ENCODE measurements at regions of chr14 and their contacts with region 1.

Region 1: DNA sequence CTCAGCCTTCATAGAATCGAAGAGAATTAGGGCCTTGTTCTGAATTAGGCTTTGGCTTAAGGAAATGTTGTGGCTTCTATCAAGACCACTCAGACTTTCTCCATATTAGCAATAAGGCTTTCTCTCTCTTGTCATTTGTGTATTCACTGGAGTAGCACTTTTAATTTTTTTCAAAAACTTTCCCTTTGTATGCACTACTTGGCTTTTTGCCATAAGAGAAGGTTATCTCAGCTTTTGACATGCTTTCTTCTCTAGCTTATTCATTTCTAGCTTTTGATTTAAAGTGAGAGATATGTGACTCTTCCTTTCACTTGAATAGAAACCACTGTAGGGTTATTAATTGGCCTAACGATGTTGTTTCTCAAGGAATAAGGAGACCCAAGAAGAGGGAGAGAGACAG is 244.2 kb downstream of the GPHN start:
- DNase-seq: no peak
- H3K4me3 Mint-ChIP-seq: no peak overlapping the region
- H3K27ac Mint-ChIP-seq: no peak overlapping the region
- H3K4me1 Mint-ChIP-seq: peaks cover 7% of the 10 kb centered on the region
- H3K27me3 Mint-ChIP-seq: no peaks in the 10 kb centered on the region

Region 2: DNA sequence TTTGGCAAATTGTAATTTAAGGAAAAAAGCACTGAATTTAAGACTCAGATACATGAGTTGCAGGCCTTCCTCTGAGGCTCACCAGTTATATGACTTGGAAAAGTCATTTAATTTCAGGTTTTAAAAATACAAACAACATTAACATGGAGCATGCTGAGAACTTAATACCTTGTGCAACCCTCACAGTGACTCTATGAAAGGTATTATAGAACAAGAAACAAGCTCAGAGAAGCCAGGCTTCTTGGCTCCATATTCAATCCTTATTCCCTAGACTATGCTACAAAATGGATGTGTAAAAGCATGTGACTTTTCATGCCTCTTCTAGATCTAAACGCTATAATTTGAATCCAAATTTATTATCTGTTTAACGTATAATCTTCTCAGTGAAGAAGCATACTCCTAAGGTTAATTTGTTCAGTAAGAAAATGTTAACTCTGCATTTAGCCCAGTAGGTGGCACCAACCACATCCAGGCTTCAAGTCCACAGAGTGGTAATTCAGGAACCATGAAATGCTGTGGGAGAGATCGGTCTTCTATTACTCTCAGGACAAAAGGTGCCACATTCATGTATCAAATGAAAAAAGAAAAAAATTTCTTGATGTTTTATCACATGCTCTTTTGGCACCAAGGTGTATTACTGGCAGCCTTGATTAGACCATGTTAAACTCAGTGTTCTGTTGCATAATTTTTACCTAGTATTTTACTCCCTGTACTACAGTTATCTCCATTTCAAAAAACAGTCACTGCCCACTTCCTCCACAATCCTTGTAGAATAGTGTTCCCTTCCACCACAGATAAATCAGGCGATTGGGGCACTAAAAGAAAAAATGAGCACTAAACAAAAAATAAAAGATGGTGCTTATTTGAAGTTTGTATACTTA is 256.7 kb before region 1 on chr14:
- CTCF ChIA-PET with region 1: no interaction called
- POLR2A ChIA-PET with region 1: no interaction called
- intact Hi-C with region 1: loop called (anchors 10 kb)
- DNase-seq: peak; percentile 41
- H3K4me3 Mint-ChIP-seq: no peak overlapping the region
- H3K27ac Mint-ChIP-seq: no peak overlapping the region
- H3K4me1 Mint-ChIP-seq: peaks cover 12% of the 10 kb centered on the region
- H3K27me3 Mint-ChIP-seq: peaks cover 1% of the 10 kb centered on the region

Region 3: DNA sequence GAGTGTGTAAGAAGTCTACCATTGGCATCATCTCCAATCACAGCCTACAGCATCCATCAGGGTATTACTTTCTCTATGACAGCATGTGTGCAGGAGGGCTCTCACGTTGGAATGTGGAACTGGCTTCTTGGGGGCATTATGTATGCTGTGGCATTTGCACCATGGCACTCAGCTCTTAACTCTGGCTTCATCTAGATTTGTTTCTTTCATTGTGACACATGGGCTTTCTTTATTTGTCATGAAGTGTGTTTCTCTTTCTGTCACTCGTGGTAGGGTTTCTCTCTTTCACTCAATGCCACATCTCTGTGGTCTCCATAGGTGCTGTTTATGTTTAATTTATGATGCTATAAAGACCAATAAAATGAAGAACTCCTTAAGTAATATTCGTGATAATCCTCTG is 245.9 kb after region 1 on chr14:
- CTCF ChIA-PET with region 1: no interaction called
- POLR2A ChIA-PET with region 1: no interaction called
- intact Hi-C with region 1: loop called (anchors 10 kb)
- DNase-seq: peak; percentile 37
- H3K4me3 Mint-ChIP-seq: no peak overlapping the region
- H3K27ac Mint-ChIP-seq: no peak overlapping the region
- H3K4me1 Mint-ChIP-seq: peaks cover 10% of the 10 kb centered on the region
- H3K27me3 Mint-ChIP-seq: no peaks in the 10 kb centered on the region

Region 4: DNA sequence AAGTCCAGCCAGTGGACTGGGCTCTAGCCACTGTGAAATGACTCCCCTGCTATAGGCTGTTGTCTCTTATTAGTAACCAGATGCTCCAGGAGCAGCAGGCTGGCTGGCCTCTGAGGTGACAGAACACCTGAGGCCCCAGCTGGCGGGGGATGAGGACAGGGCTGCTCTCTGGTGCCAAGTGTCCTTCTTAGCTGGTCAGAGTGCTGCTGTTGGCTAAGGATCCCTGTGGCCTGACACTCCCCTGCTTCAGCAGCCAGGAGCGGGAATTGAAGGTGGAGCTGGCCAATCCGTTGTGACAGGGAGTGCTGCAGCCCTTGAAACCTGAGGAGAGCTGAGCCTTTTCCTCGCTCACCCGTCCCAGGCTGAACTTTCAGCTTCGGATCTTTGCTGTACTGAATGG is 705.7 kb after region 1 on chr14:
- CTCF ChIA-PET with region 1: no interaction called
- POLR2A ChIA-PET with region 1: no interaction called
- intact Hi-C with region 1: no loop called
- DNase-seq: no peak
- H3K4me3 Mint-ChIP-seq: no peak overlapping the region
- H3K27ac Mint-ChIP-seq: no peak overlapping the region
- H3K4me1 Mint-ChIP-seq: peaks cover 3% of the 10 kb centered on the region
- H3K27me3 Mint-ChIP-seq: no peaks in the 10 kb centered on the region

Measured in activated CD4-positive, alpha-beta memory T cell treated with anti-CD3 and anti-CD28 coated beads for 36 hours (primary cell).